Posterior vena cava (tissue), 2 donors: ENCODE measurements at regions of chr3 and their contacts with region 1.

Region 1: GRCh38 chr3:65732051-65732935 is 306.4 kb downstream of the MAGI1 start:
- DNase-seq: no peak

Region 2: DNA sequence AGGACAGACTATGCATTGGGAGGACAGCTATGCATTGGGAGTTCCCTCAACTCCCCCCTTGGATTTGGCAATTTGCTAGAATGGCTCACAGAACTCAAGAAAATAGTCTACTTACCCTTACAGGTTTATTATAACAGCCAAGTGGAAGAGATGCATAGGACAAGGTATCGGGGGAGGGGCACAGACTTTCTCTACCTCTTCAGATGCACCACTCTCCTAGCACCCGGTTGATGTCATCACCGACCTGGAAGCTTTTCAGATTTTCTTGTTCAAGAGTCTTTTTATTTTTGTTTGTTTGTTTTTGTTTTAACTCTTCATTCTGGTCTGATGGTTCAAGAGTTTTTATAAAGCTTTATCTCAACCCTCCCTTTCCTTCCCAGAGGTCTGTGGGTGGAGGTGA is 1023.8 kb before region 1 on chr3:
- intact Hi-C with region 1: loop called in 1 of 2 experiments (anchors 10 kb)
- DNase-seq: no peak

Region 3: GRCh38 chr3:65439641-65440284 is 292.5 kb before region 1 on chr3:
- intact Hi-C with region 1: loop called in 1 of 2 experiments (anchors 10 kb)
- DNase-seq: no peak